ENCODE measurements at regions of chr1 and their contacts with region 1.

Region 1: DNA sequence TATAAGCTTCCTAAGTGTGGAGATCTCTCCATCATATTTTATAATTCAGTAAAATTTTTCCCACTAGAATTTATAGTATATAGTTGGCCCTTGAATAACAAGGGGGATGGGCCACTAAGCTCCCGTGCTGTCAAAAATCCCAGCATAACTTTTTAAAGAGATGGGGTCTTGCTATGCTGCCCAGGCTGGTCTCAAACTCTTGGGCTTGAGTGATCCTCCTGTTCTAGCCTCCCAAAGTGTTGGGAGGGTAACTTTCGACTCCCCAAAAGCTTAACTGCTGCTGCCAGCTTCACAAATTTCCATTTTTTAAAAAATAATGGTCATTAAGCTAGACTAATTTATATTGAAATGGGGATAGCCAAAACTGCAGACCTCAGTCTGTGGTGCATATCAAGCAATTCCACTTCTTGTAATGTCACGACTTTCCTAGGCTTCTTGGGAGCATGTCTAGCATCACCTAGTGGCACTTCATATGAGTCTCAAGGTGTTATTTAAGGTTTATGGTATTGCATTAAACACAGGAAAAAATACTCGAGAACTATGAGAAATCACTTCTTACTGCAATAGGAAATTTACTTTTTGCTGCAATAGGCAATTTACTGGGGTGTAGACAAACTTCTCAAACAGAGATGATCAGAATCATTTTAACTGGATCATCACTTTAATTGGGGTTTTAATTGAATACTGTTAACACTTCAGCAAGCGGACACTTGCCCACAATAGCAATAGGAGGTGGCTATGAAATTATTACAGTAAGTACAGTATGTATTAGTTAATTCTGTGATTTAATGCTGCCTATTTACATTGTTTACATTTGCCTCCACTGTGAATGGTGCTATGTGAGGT is 19.3 kb upstream of the ACTA1 start:
- DNase-seq: peak; percentile 51
- H3K4me3 Mint-ChIP-seq: no peak overlapping the region
- H3K27ac Mint-ChIP-seq: no peak overlapping the region
- H3K4me1 Mint-ChIP-seq: peaks cover 6% of the 10 kb centered on the region
- H3K27me3 Mint-ChIP-seq: no peaks in the 10 kb centered on the region
- CTCF ChIP-seq: peak; percentile 67

Region 2: GRCh38 chr1:228691926-228692325 is 761.3 kb before region 1 on chr1:
- CTCF ChIA-PET with region 1: interaction called, 14 read pairs
- POLR2A ChIA-PET with region 1: no interaction called
- intact Hi-C with region 1: no loop called
- DNase-seq: peak; percentile 84
- H3K4me3 Mint-ChIP-seq: no peak overlapping the region
- H3K27ac Mint-ChIP-seq: no peak overlapping the region
- H3K4me1 Mint-ChIP-seq: peaks cover 18% of the 10 kb centered on the region
- H3K27me3 Mint-ChIP-seq: no peaks in the 10 kb centered on the region
- CTCF ChIP-seq: peak; percentile 85

Region 3: GRCh38 chr1:229341774-229342655 is 111.2 kb before region 1 on chr1:
- CTCF ChIA-PET with region 1: interaction called, 5 read pairs
- POLR2A ChIA-PET with region 1: interaction called, 3 read pairs
- intact Hi-C with region 1: loop called (anchors 5 kb)
- DNase-seq: peak; percentile 93
- H3K4me3 Mint-ChIP-seq: peak overlapping the region; percentile 89
- H3K27ac Mint-ChIP-seq: peak overlapping the region; percentile 80
- H3K4me1 Mint-ChIP-seq: peaks cover 38% of the 10 kb centered on the region
- H3K27me3 Mint-ChIP-seq: peaks cover 21% of the 10 kb centered on the region
- CTCF ChIP-seq: no peak

Region 4: DNA sequence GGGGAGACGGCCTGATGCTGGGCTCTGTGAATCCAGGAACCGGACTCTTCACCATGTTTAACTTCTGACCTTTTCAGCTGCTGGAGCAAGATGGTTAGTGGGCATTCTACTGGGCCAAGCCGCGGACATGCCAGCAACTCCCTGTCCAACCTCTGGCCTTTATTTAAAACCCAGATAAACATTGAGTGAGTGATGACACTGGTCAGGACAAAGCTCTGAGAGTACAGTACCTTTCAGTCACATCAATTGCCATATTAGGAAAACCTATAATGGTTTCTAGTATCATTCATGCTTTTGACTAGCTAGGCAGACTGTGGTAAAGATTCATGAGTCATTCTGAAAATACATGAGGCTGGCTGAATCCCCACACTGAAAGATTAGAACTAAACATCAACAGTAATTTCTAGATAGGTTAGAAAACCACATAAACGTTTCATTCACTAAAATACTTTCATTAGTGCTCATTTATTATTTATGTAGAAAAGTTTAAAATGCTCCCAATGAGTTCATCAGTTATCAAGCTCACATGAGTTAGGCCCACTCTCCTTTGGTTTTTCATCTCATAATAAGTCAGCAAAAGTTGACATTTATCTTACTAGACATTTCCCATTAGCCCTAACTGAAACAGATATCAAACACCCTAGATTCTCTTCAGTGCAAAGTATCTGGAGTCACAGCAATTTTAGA is 12.2 kb before region 1 on chr1:
- CTCF ChIA-PET with region 1: interaction called, 12 read pairs
- POLR2A ChIA-PET with region 1: interaction called, 9 read pairs
- intact Hi-C with region 1: no loop called
- DNase-seq: peak; percentile 36
- H3K4me3 Mint-ChIP-seq: no peak overlapping the region
- H3K27ac Mint-ChIP-seq: no peak overlapping the region
- H3K4me1 Mint-ChIP-seq: no peaks in the 10 kb centered on the region
- H3K27me3 Mint-ChIP-seq: no peaks in the 10 kb centered on the region
- CTCF ChIP-seq: no peak

Region 5: DNA sequence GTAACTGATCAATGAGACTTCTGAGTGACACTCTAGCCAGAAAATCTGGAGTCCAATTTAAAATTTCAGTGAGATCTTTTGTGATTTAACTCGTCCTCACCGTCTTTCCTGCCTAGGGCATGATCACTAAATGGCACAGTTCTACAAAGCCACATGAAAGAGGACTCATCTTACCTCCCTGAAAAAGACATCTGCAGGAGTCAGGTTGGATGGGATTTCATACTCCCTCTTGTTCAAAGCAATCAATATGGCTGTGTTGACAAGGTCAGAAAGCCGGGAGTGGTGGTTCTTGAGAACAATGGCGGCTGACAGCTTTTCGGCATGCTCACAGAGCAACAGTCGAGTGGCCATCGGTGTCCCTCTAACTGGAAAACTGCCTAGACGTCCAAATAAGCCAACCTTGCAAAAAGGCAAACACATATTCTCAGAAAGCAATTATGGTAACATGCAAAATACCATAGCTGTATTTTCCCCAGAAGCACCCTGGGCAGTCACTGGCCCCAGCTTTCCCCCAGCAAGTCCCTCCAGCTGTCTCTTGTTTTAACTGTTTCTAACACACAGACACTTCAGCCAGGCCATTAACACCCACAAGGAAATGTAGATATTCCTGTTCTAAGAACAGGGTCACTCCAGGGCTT is 17.3 kb after region 1 on chr1:
- CTCF ChIA-PET with region 1: interaction called, 14 read pairs
- POLR2A ChIA-PET with region 1: no interaction called
- intact Hi-C with region 1: no loop called
- DNase-seq: no peak
- H3K4me3 Mint-ChIP-seq: no peak overlapping the region
- H3K27ac Mint-ChIP-seq: no peak overlapping the region
- H3K4me1 Mint-ChIP-seq: no peaks in the 10 kb centered on the region
- H3K27me3 Mint-ChIP-seq: no peaks in the 10 kb centered on the region
- CTCF ChIP-seq: no peak

Measured in MCF 10A (cell line).